Calu3 (cell line): ENCODE measurements at regions of chr5 and their contacts with region 1.

Region 1: GRCh38 chr5:73812962-73813588 is 187.1 kb downstream of the ARHGEF28 start:
- DNase-seq: peak; percentile 76
- H3K4me3 Mint-ChIP-seq: peak overlapping the region; percentile 81
- H3K27ac Mint-ChIP-seq: peak overlapping the region; percentile 86
- H3K4me1 Mint-ChIP-seq: peaks cover 53% of the 10 kb centered on the region
- H3K27me3 Mint-ChIP-seq: no peaks in the 10 kb centered on the region
- CTCF ChIP-seq: no peak

Region 2: GRCh38 chr5:73792687-73793320 is 20.3 kb before region 1 on chr5:
- CTCF ChIA-PET with region 1: interaction called, 15 read pairs
- intact Hi-C with region 1: loop called (anchors 2 kb)
- DNase-seq: peak; percentile 84
- H3K4me3 Mint-ChIP-seq: no peak overlapping the region
- H3K27ac Mint-ChIP-seq: peak overlapping the region; percentile 47
- H3K4me1 Mint-ChIP-seq: peaks cover 62% of the 10 kb centered on the region
- H3K27me3 Mint-ChIP-seq: no peaks in the 10 kb centered on the region
- CTCF ChIP-seq: peak; percentile 98

Region 3: DNA sequence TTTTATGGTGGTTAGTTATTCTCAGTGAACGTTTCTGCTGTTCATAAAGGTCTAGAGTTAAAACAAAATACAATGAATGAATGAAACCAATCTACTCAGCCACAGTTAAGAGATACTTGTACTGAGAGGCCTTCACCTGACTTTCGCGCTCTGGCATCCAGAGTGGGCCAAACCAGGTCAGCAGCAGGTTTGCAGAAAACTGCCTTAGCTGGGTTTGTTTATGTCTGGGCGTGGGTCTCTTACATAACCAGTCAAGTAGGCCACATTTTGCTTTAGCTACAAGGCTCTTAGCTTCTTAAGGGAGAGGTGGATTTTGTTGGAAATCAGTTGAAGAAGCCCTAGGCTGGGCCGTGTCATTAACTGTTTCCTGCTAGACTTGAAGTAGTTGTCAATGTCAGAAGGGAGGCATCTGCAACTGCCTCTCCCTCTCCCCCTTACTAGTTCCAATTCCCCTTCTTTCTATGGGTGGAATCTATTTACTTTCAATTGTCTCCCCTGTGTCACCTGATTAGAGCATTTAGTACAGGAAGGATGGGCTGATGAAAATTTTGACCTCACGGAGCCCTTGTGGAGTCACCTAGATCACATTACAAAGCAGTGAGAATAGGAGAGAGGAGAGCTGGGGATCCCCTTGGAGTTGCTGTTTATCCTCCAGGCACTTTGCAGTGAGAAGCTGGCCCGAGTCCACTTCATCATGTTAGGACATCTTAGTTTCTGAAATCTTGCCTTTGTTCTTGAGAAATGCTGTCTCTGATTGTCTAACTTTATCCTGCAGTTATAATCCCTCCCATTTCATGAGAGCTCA is 13.4 kb after region 1 on chr5:
- CTCF ChIA-PET with region 1: interaction called, 33 read pairs
- intact Hi-C with region 1: loop called (anchors 1 kb)
- DNase-seq: no peak
- H3K4me3 Mint-ChIP-seq: no peak overlapping the region
- H3K27ac Mint-ChIP-seq: no peak overlapping the region
- H3K4me1 Mint-ChIP-seq: peaks cover 32% of the 10 kb centered on the region
- H3K27me3 Mint-ChIP-seq: no peaks in the 10 kb centered on the region
- CTCF ChIP-seq: no peak

Region 4: GRCh38 chr5:73853091-73853490 is 40.0 kb after region 1 on chr5:
- CTCF ChIA-PET with region 1: interaction called, 3 read pairs
- intact Hi-C with region 1: loop called (anchors 2 kb)
- DNase-seq: peak; percentile 61
- H3K4me3 Mint-ChIP-seq: peak overlapping the region; percentile 7
- H3K27ac Mint-ChIP-seq: peak overlapping the region; percentile 71
- H3K4me1 Mint-ChIP-seq: peaks cover 32% of the 10 kb centered on the region
- H3K27me3 Mint-ChIP-seq: no peaks in the 10 kb centered on the region
- CTCF ChIP-seq: no peak

Region 5: GRCh38 chr5:73962801-73963425 is 149.8 kb after region 1 on chr5:
- CTCF ChIA-PET with region 1: no interaction called
- intact Hi-C with region 1: no loop called
- DNase-seq: no peak
- H3K4me3 Mint-ChIP-seq: no peak overlapping the region
- H3K27ac Mint-ChIP-seq: no peak overlapping the region
- H3K4me1 Mint-ChIP-seq: no peaks in the 10 kb centered on the region
- H3K27me3 Mint-ChIP-seq: no peaks in the 10 kb centered on the region
- CTCF ChIP-seq: no peak

Region 6: GRCh38 chr5:74040065-74040551 is 227.0 kb after region 1 on chr5:
- CTCF ChIA-PET with region 1: no interaction called
- intact Hi-C with region 1: no loop called
- DNase-seq: no peak
- H3K4me3 Mint-ChIP-seq: no peak overlapping the region
- H3K27ac Mint-ChIP-seq: no peak overlapping the region
- H3K4me1 Mint-ChIP-seq: peaks cover 15% of the 10 kb centered on the region
- H3K27me3 Mint-ChIP-seq: no peaks in the 10 kb centered on the region
- CTCF ChIP-seq: no peak